ENCODE measurements at regions of chr15 and their contacts with region 1.

Region 1: GRCh38 chr15:25508369-25509002 is 69.7 kb upstream of the UBE3A start:
- DNase-seq: no peak
- ATAC-seq: no peak
- H3K4me3 ChIP-seq: no peak overlapping the region
- H3K27ac ChIP-seq: no peak overlapping the region
- H3K4me1 ChIP-seq: no peaks in the 10 kb centered on the region
- H3K27me3 ChIP-seq: no peaks in the 10 kb centered on the region
- CTCF ChIP-seq: peak in 2 of 4 donors; percentile 11 to 14

Region 2: DNA sequence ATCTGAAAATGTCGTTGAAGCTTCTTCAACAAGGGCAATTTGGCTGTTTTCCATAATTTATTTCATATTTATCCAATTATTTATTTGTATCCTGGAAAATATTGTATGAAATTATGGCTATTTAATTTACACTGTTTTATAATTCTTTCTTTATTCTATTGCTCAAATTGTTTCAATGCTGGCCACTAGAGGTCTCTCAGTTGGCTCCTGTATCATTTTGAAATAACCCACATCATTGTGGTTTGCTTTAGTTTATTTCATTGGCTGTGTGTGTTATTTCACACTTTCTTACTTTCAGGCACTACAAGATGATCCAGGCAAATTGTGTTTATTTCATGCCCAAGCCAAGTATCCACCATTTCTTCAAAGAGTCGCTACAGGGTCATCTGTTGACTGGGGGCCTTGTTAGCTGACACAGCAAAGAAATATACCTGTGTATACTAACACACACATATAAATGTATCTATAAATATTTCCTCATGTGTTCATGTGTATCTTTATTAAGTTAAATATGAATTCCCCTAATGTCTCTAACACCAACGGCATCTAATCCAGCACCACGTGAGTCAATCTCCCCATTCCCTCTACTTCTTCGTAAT is 746.7 kb before region 1 on chr15:
- intact Hi-C with region 1: loop called in 1 of 3 experiments (anchors 10 kb)
- DNase-seq: no peak
- ATAC-seq: peak in 1 of 4 donors; percentile 38
- H3K4me3 ChIP-seq: no peak overlapping the region
- H3K27ac ChIP-seq: no peak overlapping the region
- H3K4me1 ChIP-seq: no peaks in the 10 kb centered on the region
- H3K27me3 ChIP-seq: peaks cover 0 to 7% (median 0%) of the 10 kb centered on the region in 4 donors
- CTCF ChIP-seq: peak in 3 of 4 donors; percentile 22 to 28 (median 24)

Measured in pancreas (tissue), 10 donors.